Activated naive CD4-positive, alpha-beta T cell treated with anti-CD3 and anti-CD28 coated beads for 36 hours (primary cell): ENCODE measurements at regions of chr2 and their contacts with region 1.

Region 1: GRCh38 chr2:189440947-189441708 is at the start of gene WDR75:
- DNase-seq: peak; percentile 95
- H3K4me3 Mint-ChIP-seq: no peak within 1 kb of the TSS
- H3K27ac Mint-ChIP-seq: peak within 1 kb of the TSS; percentile 97
- H3K4me1 Mint-ChIP-seq: peaks cover 12% of the 10 kb centered on the region
- H3K27me3 Mint-ChIP-seq: no peaks in the 10 kb centered on the region
- total RNA-seq, gene WDR75: 69.7 to 72.7 TPM

Region 2: DNA sequence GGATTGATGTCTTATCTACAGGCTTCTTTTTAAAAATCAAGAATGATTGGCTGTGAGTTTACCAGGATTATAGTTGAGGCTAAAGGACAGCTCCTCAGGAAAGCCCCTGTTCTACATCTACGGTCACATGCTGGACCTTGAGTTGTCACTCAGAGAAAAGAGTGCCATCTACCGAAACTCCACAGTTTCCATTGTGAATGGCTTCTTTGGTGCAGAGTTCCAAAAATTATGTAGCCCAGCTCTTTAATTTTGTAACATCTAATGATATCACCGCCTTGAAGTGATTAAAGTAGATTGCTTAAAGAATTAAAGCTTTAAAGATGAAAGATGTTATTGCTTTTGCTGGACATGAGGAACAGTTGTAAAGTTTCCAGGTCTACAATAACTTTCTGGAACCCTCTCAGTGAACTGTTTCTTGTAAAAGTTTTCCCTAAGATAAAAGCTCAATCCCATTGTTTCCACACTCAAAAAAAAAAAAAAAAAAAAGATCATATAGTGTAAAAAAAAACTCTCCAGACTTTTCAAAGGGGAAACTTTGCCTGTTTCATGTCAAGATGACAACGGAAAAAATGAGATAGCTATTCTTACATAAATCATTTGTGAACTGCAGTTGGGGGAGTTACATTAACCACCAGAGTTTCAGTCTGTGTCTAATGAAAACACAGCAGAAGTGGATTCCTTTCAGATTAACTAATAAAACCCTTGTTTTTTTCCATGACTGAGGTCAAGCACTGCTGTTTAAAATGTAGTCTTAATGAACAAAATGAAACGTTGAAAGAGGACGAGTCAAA is 462.6 kb before region 1 on chr2:
- CTCF ChIA-PET with region 1: no interaction called
- intact Hi-C with region 1: loop called (anchors 1 kb)
- DNase-seq: peak; percentile 6
- H3K4me3 Mint-ChIP-seq: peak overlapping the region; percentile 7
- H3K27ac Mint-ChIP-seq: peak overlapping the region; percentile 51
- H3K4me1 Mint-ChIP-seq: peaks cover 19% of the 10 kb centered on the region
- H3K27me3 Mint-ChIP-seq: peaks cover 19% of the 10 kb centered on the region

Region 3: GRCh38 chr2:189641590-189641989 is 200.5 kb after region 1 on chr2:
- CTCF ChIA-PET with region 1: no interaction called
- intact Hi-C with region 1: loop called (anchors 1 kb)
- DNase-seq: peak; percentile 71
- H3K4me3 Mint-ChIP-seq: no peak overlapping the region
- H3K27ac Mint-ChIP-seq: peak overlapping the region; percentile 10
- H3K4me1 Mint-ChIP-seq: peaks cover 25% of the 10 kb centered on the region
- H3K27me3 Mint-ChIP-seq: no peaks in the 10 kb centered on the region

Region 4: DNA sequence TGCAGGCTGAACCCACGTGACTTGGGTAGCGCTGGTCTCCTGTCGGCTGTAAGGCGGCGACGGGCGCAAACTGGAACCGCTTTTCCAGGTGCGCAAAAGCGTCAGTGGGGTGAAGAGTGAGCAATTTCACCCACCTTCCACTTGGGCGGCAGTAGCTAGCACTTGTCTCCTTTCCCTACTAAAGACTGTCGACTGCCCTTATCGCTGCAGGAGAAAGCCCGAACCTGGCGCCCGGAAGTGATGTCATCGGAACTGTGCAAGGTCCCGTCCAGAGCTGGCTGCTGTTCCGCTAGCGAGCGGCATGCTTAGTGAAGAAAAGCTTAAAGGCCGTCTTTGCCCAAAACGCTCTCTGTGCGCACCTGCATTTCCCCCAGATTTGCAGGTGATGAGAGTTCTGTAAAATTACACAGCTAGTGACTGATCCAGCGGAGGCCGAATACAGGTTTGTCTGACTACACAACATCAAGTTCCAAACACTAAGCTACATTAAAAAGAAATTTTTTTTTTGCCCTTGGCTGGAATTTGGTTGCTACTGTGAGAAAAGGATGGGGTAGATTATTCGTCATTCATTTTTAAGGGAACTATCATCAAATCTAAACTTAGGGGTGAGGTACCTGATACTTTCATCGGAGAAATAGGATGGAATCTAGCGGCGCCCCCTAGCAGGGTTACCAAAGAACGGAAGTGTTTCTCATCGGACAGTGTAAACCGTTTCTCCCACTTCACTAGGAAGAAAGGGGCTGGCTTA is 321.6 kb after region 1 on chr2 and contains the start of gene OSGEPL1:
- CTCF ChIA-PET with region 1: interaction called, 6 read pairs
- intact Hi-C with region 1: loop called (anchors 1 kb)
- DNase-seq: peak; percentile 95
- H3K4me3 Mint-ChIP-seq: peak within 1 kb of the TSS; percentile 92
- H3K27ac Mint-ChIP-seq: peak within 1 kb of the TSS; percentile 97
- H3K4me1 Mint-ChIP-seq: peaks cover 13% of the 10 kb centered on the region
- H3K27me3 Mint-ChIP-seq: no peaks in the 10 kb centered on the region
- total RNA-seq, gene OSGEPL1: 15.5 to 15.8 TPM

Region 5: DNA sequence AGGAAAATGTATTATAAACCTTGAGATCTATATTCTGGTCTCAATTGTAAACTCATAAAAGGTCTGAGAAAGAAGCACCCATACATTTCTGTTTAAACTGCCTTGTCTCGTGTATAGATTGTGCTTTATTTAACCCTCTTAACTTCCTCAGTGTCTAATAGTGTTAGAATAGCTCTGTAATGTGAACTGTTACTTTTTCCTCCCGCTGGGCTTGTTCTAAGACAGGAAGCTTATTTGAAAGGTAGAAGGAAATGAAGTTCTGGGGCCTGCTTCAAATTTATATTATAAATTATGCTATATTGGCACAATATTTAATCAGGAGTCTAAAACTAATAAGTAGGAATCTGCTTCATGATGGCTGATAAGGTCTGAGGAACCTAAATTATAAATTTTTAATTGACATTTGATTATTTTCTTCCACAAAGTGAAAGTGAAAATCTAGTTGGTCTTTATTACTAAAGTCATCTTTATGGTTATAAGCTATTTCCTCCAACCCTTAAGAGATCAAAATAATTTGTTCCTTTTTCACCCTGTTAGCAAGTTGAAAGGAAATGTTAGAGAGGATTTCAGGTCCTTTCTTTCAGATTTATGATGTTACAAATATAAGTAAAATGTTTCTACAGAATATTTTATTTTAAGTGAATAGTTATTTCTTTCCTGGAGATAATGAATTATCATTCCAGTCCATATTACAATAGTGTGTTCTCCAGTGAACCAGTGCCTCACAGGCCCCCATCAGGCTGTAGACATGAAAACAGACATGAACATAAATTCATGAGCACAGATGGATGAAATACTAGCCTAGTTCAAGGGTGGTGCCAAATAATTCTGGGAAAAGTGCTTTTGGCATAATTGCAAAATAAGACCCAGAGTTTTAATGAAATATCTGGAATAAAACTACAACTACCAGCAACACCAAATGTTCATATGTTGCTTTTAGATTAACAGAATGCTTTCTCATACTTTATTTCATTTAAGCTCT is 975.0 kb after region 1 on chr2:
- CTCF ChIA-PET with region 1: no interaction called
- intact Hi-C with region 1: loop called (anchors 10 kb)
- DNase-seq: no peak
- H3K4me3 Mint-ChIP-seq: peak overlapping the region; percentile 58
- H3K27ac Mint-ChIP-seq: peak overlapping the region; percentile 91
- H3K4me1 Mint-ChIP-seq: peaks cover 73% of the 10 kb centered on the region
- H3K27me3 Mint-ChIP-seq: no peaks in the 10 kb centered on the region